Lower leg skin (tissue), 4 donors: ENCODE measurements at regions of chr2 and their contacts with region 1.

Region 1: GRCh38 chr2:9629222-9630000 is 1.4 kb downstream of the YWHAQ start:
- DNase-seq: no peak
- H3K4me3 ChIP-seq: peak overlapping the region; percentile 73
- CTCF ChIP-seq: no peak
- POLR2A ChIP-seq: no peak

Region 2: DNA sequence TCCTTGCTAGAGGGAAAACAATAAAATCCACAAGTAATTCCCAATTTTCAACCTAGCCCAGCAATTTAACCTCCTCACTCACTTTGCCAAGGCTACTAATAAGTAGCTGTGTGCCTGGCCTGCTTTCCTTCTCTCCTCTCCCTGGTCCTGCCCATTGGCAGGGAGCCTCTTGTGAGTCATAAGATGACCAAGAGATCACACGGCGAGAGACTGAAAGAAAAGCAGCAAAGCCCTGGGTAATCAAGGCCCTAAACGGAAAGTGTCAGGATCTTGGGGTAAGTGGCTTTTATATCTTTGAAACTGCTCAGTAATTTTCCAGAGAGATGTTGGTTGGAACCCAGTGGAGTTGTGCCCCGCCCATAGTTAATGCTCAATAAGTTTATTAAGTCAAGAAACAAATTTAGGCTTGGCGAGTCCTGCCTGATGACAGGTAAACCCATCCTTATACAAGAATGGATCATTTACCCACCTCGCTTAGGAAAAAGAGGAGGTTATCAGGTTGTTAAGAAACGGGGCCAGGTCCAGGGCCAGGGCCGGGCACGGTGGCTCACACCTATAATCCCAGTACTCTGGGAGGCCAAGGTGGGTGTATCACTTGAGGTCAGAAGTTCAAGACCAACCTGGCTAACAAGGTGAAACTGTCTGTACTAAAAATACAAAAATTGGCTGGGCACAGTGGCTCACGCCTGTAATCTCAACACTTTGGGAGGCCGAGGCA is 63.8 kb before region 1 on chr2:
- intact Hi-C with region 1: loop called (anchors 10 kb)
- DNase-seq: peak; percentile 91 to 92
- H3K4me3 ChIP-seq: no peak overlapping the region
- CTCF ChIP-seq: no peak
- POLR2A ChIP-seq: no peak